ENCODE measurements at regions of chr5 and their contacts with region 1.

Region 1: DNA sequence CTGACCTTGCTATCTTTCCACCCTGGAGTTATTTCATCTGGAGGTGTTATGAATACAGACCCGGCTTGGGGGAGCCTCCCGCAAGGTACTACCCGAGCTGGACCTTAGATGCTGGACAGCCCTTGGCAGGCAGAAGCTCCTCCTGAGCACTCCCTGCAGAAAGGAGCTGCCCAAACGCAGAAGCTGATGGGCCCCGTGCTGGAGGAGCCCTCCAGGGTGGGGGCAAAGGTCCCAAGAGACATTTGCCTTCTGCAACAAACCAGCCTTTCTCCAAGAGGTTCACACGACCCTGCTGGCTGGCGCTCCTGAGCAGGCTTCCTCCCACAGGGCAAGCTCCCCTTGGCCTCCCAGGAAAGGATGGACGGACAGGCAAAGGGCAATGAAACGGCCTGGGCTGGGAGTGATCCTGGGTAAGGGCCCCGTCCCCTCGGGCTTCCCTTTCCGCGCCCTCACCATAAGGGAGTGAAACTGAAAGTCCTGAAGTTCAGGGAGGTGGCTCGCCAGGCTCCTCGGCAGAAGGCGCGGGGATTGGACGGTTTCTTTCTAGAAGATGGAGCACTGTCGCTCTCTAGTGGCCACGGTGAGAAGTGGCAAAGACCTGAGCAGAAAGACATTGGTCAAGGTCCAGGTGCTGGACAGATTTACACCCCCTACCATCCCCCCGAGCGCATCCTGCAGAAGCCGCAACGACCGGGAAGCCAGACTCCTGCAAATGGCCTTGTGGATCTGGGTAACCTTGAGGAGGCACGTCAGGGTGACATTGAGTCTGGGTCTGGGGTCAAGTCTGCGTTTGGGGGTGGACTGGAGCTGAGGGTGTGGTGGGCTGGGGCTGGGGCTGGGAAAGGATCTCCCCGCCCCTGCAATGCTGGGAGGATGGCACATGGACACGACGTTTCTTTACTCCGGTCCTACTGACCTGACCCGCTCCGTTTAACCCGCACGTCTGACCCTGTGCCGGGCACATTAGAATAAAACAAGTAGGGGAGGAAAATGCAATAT is 56.4 kb downstream of the NEURL1B start:
- DNase-seq: peak; percentile 91
- H3K4me3 Mint-ChIP-seq: peak overlapping the region; percentile 70
- H3K27ac Mint-ChIP-seq: peak overlapping the region; percentile 50
- H3K4me1 Mint-ChIP-seq: peaks cover 11% of the 10 kb centered on the region
- H3K27me3 Mint-ChIP-seq: peaks cover 10% of the 10 kb centered on the region

Region 2: GRCh38 chr5:172194985-172195774 is 502.2 kb before region 1 on chr5:
- CTCF ChIA-PET with region 1: no interaction called
- intact Hi-C with region 1: loop called (anchors 10 kb)
- DNase-seq: no peak
- H3K4me3 Mint-ChIP-seq: no peak overlapping the region
- H3K27ac Mint-ChIP-seq: no peak overlapping the region
- H3K4me1 Mint-ChIP-seq: no peaks in the 10 kb centered on the region
- H3K27me3 Mint-ChIP-seq: peaks cover 3% of the 10 kb centered on the region

Region 3: GRCh38 chr5:172417983-172418630 is 279.3 kb before region 1 on chr5:
- CTCF ChIA-PET with region 1: no interaction called
- intact Hi-C with region 1: no loop called
- DNase-seq: no peak
- H3K4me3 Mint-ChIP-seq: no peak overlapping the region
- H3K27ac Mint-ChIP-seq: no peak overlapping the region
- H3K4me1 Mint-ChIP-seq: peaks cover 4% of the 10 kb centered on the region
- H3K27me3 Mint-ChIP-seq: no peaks in the 10 kb centered on the region

Region 4: DNA sequence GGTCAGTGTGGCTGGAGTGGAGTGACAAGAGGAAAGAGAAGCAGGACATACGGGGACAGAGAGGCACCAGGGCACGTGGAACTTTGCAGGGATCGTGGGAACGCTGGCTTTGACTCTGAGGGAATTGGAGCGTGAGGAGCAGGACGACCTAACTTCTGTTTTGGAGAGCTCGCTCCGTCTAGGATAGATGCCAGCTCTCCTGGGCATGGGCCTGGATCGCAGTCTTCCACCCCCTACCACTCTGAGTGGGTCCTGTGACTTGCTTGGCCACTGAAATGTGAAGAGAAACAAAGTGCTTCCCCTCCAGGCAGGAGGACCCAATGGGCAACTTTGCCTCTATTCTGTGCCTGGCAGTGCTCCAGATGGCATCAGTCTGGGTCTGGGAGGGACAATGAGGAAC is 234.4 kb before region 1 on chr5:
- CTCF ChIA-PET with region 1: interaction called, 39 read pairs
- intact Hi-C with region 1: loop called (anchors 1 kb)
- DNase-seq: no peak
- H3K4me3 Mint-ChIP-seq: no peak overlapping the region
- H3K27ac Mint-ChIP-seq: no peak overlapping the region
- H3K4me1 Mint-ChIP-seq: peaks cover 13% of the 10 kb centered on the region
- H3K27me3 Mint-ChIP-seq: no peaks in the 10 kb centered on the region

Region 5: DNA sequence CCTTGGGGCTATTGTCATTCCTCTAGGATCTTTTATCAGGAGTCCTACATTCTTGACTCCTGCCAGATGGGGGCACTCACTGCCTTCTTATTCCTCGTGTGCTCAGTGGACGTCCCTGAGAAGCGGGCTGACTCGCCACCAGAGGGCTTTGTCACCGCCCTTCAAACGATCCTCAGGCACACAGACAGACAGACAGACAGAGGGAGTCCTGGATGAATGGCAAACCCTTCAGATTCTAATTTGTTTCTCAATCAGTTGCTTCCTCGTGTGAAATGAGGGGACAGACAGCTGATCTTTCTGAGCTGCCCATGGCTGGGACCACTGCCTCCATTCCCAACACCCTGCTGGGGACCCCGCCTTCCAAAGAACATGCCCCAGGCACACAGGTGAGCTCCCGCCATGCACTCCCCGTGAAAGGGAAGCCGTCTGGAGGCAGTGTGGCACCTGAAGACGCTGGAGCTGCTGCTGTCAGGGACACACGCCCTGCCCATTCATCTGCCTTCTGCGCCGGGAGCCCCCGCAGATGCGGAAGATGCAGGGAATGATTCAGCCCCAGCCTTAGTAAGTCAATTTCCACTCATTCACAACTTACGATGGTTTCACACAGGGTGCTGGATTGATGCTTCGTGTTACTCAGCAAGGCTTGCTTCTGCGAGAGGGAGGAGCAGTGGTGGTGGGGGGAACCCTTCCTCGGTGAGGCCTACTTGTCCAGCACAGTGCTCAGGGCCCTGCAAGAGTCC is 218.2 kb before region 1 on chr5:
- CTCF ChIA-PET with region 1: interaction called, 11 read pairs
- intact Hi-C with region 1: loop called (anchors 1 kb)
- DNase-seq: peak; percentile 83
- H3K4me3 Mint-ChIP-seq: no peak overlapping the region
- H3K27ac Mint-ChIP-seq: no peak overlapping the region
- H3K4me1 Mint-ChIP-seq: no peaks in the 10 kb centered on the region
- H3K27me3 Mint-ChIP-seq: no peaks in the 10 kb centered on the region

Region 6: GRCh38 chr5:172640822-172641358 is 56.5 kb before region 1 on chr5 and contains the start of gene NEURL1B:
- CTCF ChIA-PET with region 1: interaction called, 4 read pairs
- intact Hi-C with region 1: loop called (anchors 2 kb)
- DNase-seq: peak; percentile 71
- H3K4me3 Mint-ChIP-seq: peak within 1 kb of the TSS; percentile 34
- H3K27ac Mint-ChIP-seq: no peak within 1 kb of the TSS
- H3K4me1 Mint-ChIP-seq: peaks cover 3% of the 10 kb centered on the region
- H3K27me3 Mint-ChIP-seq: peaks cover 37% of the 10 kb centered on the region
- total RNA-seq, gene NEURL1B: 0.57 to 0.64 TPM

Region 7: GRCh38 chr5:172666251-172666650 is 31.2 kb before region 1 on chr5:
- CTCF ChIA-PET with region 1: interaction called, 5 read pairs
- intact Hi-C with region 1: loop called (anchors 1 kb)
- DNase-seq: no peak
- H3K4me3 Mint-ChIP-seq: no peak overlapping the region
- H3K27ac Mint-ChIP-seq: no peak overlapping the region
- H3K4me1 Mint-ChIP-seq: no peaks in the 10 kb centered on the region
- H3K27me3 Mint-ChIP-seq: no peaks in the 10 kb centered on the region

Region 8: GRCh38 chr5:172683696-172684471 is 13.5 kb before region 1 on chr5:
- CTCF ChIA-PET with region 1: interaction called, 10 read pairs
- intact Hi-C with region 1: no loop called
- DNase-seq: peak; percentile 63
- H3K4me3 Mint-ChIP-seq: peak overlapping the region; percentile 61
- H3K27ac Mint-ChIP-seq: no peak overlapping the region
- H3K4me1 Mint-ChIP-seq: peaks cover 14% of the 10 kb centered on the region
- H3K27me3 Mint-ChIP-seq: peaks cover 6% of the 10 kb centered on the region

Region 9: DNA sequence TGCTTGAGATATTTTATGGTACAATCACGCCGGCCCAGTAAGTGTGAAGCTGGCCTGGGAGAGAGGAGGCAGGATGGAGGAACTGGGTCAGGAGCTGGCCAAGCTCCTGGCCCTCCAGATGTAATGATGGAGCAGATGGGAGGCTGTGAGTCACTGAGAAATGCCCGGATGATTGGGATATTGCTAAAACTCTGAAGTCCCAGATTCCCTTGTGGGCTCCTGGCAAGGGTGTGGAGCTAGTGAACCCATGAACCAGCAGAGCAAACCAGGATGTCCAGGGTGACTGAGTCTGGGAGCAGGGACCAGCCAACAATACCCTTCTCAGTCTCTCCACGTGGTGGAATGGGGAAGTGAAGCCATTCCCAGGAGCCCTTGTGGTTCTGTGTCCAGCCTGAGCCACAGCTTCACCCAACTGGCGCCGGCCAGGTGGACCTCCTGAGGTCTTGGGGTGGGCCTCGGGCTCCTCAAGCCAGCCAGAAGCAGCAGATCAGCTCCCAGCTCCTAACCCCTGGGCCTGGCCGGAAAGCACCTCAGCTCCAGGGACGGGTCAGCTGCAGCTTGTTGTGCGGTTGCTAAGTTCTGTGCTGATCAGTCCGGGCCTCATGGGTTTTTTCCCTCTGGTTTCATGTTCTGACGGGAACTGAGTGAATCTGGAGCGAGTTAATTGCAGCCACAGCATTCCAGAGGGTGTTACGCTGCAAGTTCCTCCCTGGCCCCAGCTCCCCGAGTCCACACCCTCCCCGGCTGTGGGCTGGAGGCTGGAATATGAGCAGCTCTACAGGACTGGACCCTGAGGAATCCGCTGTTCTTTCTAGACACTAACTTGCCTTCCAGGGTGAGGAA is 35.9 kb after region 1 on chr5:
- CTCF ChIA-PET with region 1: no interaction called
- intact Hi-C with region 1: no loop called
- DNase-seq: no peak
- H3K4me3 Mint-ChIP-seq: no peak overlapping the region
- H3K27ac Mint-ChIP-seq: no peak overlapping the region
- H3K4me1 Mint-ChIP-seq: no peaks in the 10 kb centered on the region
- H3K27me3 Mint-ChIP-seq: no peaks in the 10 kb centered on the region

Measured in activated naive CD4-positive, alpha-beta T cell treated with anti-CD3 and anti-CD28 coated beads for 36 hours (primary cell).